Colonic mucosa (tissue), 4 donors: ENCODE measurements at regions of chr5 and their contacts with region 1.

Region 1: DNA sequence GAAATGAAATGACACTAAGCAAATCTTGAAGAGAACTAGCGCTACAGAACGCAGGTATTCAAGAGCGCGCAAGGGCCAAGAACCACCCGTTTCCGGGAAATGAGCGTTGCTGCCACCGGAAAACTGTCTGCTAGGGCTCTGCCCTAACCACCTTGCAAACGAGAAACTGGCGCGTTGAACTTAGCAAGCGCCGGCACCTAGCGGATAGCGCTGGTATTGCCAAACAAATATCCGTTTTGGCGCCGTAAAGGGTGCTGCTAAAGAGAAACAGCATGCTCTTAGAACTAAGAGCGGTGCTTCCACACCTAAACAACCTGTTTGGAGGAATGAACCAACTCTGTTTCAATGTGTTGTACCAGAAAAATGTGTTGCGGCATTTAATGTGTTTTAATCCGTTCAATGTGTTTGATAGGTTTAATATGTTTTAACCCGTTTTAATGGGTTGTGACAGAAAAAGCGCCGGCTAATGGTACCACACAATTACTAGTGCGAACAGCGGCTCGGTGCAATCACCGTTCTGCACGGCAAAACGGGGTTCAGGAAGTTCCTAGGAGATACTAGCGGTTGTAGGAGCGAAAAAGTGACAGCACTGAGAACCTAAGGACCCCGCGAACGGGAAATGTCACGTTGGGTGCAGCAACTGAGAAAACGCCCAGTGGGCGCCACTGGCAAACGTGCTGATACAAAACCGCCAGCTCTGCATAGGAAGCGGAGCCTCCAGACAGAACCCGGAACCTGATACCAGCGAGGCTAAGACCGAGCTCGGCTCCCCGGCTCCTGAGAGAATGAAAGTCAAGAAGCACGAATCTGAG is at the start of gene ANXA2R:
- DNase-seq: peak; percentile 94
- H3K4me3 ChIP-seq: peak within 1 kb of the TSS; percentile 71
- H3K27ac ChIP-seq: peak within 1 kb of the TSS; percentile 97
- H3K4me1 ChIP-seq: no peaks in the 10 kb centered on the region
- H3K27me3 ChIP-seq: no peaks in the 10 kb centered on the region
- CTCF ChIP-seq: peak; percentile 77
- total RNA-seq, gene ANXA2R: 1.1 to 1.3 TPM

Region 2: GRCh38 chr5:42791151-42791550 is 249.3 kb before region 1 on chr5:
- intact Hi-C with region 1: no loop called
- DNase-seq: no peak
- H3K4me3 ChIP-seq: no peak overlapping the region
- H3K27ac ChIP-seq: no peak overlapping the region
- H3K4me1 ChIP-seq: no peaks in the 10 kb centered on the region
- H3K27me3 ChIP-seq: no peaks in the 10 kb centered on the region
- CTCF ChIP-seq: no peak

Region 3: GRCh38 chr5:42912184-42912798 is 128.2 kb before region 1 on chr5:
- intact Hi-C with region 1: loop called (anchors 5 kb)
- DNase-seq: no peak
- H3K4me3 ChIP-seq: no peak overlapping the region
- H3K27ac ChIP-seq: no peak overlapping the region
- H3K4me1 ChIP-seq: no peaks in the 10 kb centered on the region
- H3K27me3 ChIP-seq: no peaks in the 10 kb centered on the region
- CTCF ChIP-seq: no peak

Region 4: DNA sequence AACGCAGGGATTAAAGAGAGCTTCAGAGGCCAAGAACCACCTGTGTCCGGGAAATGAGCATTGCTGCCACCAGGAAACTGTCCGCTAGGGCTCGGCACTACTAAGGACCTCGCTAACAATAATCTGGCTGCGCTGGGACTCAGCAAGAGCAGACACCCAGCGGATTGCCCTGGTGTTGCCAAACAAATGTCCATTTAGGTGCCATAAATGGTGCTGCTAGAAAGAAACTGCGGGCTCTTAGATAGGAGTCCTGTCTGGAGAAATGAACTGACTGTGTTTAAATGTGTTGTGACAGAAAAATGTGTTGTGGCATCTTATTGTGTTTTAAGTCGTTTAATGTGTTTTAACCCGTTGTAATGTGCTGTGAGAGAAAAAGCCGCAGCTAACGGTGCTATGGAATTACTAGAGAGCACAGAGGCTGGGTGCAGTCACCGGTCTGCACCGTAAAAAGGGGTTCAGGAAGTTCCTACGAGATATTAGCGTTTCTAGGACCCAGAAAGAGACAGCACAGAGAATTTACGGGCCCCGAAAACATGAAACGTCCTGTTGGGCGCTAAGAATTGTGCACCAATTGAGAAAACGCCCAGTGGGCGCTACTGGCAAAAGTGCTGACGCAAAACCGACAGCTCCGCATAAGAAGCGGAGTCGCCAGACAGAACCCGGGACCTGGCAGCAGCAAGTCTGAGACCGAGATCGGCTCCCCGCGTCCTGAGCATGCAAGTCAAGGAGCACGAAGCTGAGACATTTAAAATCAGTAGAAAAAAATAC is 91.0 kb before region 1 on chr5:
- intact Hi-C with region 1: loop called (anchors 2 kb)
- DNase-seq: peak; percentile 64
- H3K4me3 ChIP-seq: peak overlapping the region; percentile 14
- H3K27ac ChIP-seq: peak overlapping the region; percentile 82
- H3K4me1 ChIP-seq: peaks cover 10% of the 10 kb centered on the region
- H3K27me3 ChIP-seq: peaks cover 20% of the 10 kb centered on the region
- CTCF ChIP-seq: peak; percentile 38

Region 5: DNA sequence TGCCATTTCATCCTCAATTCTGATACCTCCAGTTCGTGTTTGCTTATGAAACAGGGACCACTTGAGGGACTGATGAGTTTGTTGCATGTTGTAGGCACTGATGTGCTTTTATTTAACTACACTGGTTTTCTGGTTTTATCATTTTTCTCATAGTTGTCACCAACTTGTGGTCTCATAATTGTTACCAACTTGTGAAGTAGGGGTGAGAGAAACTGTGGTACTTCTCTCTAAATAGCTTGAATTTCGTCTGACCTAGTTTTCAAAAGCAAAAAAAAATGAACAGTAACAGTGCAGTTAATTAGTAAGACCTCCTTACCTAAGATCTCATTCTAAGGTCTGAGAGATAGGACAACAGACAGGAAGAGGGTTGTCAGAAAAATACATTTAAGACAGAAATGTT is 78.4 kb before region 1 on chr5:
- intact Hi-C with region 1: no loop called
- DNase-seq: no peak
- H3K4me3 ChIP-seq: no peak overlapping the region
- H3K27ac ChIP-seq: no peak overlapping the region
- H3K4me1 ChIP-seq: no peaks in the 10 kb centered on the region
- H3K27me3 ChIP-seq: no peaks in the 10 kb centered on the region
- CTCF ChIP-seq: no peak

Region 6: GRCh38 chr5:43008369-43009153 is 31.9 kb before region 1 on chr5:
- intact Hi-C with region 1: loop called (anchors 5 kb)
- DNase-seq: peak; percentile 95
- H3K4me3 ChIP-seq: peak overlapping the region; percentile 55
- H3K27ac ChIP-seq: peak overlapping the region; percentile 98
- H3K4me1 ChIP-seq: no peaks in the 10 kb centered on the region
- H3K27me3 ChIP-seq: no peaks in the 10 kb centered on the region
- CTCF ChIP-seq: no peak